CD4-positive, alpha-beta memory T cell (primary cell): ENCODE measurements at regions of chr11 and their contacts with region 1.

Region 1: GRCh38 chr11:66545701-66546367 is at the start of gene ZDHHC24:
- DNase-seq: peak; percentile 79 to 86 (median 82)
- H3K4me3 ChIP-seq: peak within 1 kb of the TSS; percentile 82 to 84
- H3K4me3 Mint-ChIP-seq: peak within 1 kb of the TSS; percentile 85 to 96 (median 92)
- H3K27ac ChIP-seq: peak within 1 kb of the TSS; percentile 82
- H3K27ac Mint-ChIP-seq: peak within 1 kb of the TSS; percentile 67 to 98 (median 92)
- H3K4me1 ChIP-seq: peaks cover 35% of the 10 kb centered on the region
- H3K4me1 Mint-ChIP-seq: peaks cover 22 to 59% (median 34%) of the 10 kb centered on the region in 4 donors
- H3K27me3 ChIP-seq: no peaks in the 10 kb centered on the region
- H3K27me3 Mint-ChIP-seq: no peaks in the 10 kb centered on the region
- total RNA-seq, gene ZDHHC24: 24.5 to 27.2 TPM

Region 2: DNA sequence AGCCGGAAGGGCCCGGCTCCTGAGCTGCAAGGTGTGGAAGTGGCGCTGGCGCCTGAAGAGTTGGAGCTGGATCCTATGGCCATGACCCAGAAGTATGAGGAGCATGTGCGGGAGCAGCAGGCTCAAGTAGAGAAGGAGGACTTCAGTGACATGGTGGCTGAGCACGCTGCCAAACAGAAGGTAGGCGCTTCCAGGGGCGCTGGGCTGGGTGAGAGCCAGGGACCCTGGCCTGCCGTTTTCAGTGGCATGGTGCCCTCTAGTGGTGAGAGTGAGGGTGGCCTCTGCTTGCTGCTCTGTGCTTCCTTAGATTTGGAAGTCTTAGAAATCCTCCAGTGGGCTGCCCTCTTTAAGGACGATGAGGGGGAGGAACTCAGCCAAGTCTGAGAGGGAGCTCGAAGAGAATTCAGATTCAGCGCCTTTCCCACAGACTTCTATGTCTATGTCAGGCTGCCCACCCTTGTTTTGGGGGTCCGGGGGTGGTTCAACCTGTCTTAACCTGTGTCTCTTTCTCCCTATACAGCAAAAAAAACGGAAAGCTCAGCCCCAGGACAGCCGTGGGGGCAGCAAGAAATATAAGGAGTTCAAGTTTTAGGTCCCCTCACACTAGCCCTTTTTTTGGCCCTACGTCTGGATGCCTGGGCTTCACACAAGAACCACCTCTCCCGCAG is 477.5 kb before region 1 on chr11:
- CTCF ChIA-PET with region 1: no interaction called
- POLR2A ChIA-PET with region 1: no interaction called
- intact Hi-C with region 1: no loop called
- DNase-seq: peak; percentile 71 to 76 (median 72)
- H3K4me3 ChIP-seq: no peak overlapping the region
- H3K4me3 Mint-ChIP-seq: peak overlapping the region; percentile 52 to 96 (median 76)
- H3K27ac ChIP-seq: peak overlapping the region; percentile 77
- H3K27ac Mint-ChIP-seq: peak overlapping the region; percentile 92 to 99 (median 93)
- H3K4me1 ChIP-seq: peaks cover 48% of the 10 kb centered on the region
- H3K4me1 Mint-ChIP-seq: peaks cover 39 to 67% (median 51%) of the 10 kb centered on the region in 4 donors
- H3K27me3 ChIP-seq: no peaks in the 10 kb centered on the region
- H3K27me3 Mint-ChIP-seq: no peaks in the 10 kb centered on the region

Region 3: GRCh38 chr11:66480117-66480938 is 65.5 kb before region 1 on chr11 and contains the start of gene DPP3:
- CTCF ChIA-PET with region 1: no interaction called
- POLR2A ChIA-PET with region 1: interaction called, 11 read pairs
- intact Hi-C with region 1: loop called (anchors 2 kb)
- DNase-seq: peak; percentile 94 to 96 (median 96)
- H3K4me3 ChIP-seq: peak within 1 kb of the TSS; percentile 88 to 90
- H3K4me3 Mint-ChIP-seq: peak within 1 kb of the TSS; percentile 87 to 96 (median 90)
- H3K27ac ChIP-seq: peak within 1 kb of the TSS; percentile 81
- H3K27ac Mint-ChIP-seq: peak within 1 kb of the TSS; percentile 78 to 94 (median 91)
- H3K4me1 ChIP-seq: peaks cover 20% of the 10 kb centered on the region
- H3K4me1 Mint-ChIP-seq: peaks cover 13 to 48% (median 21%) of the 10 kb centered on the region in 4 donors
- H3K27me3 ChIP-seq: no peaks in the 10 kb centered on the region
- H3K27me3 Mint-ChIP-seq: no peaks in the 10 kb centered on the region
- total RNA-seq, gene DPP3: 21.0 to 24.0 TPM

Region 4: GRCh38 chr11:66568124-66568916 is 22.5 kb after region 1 on chr11 and contains the start of gene CTSF:
- CTCF ChIA-PET with region 1: interaction called, 3 read pairs
- POLR2A ChIA-PET with region 1: interaction called, 18 read pairs
- intact Hi-C with region 1: no loop called
- DNase-seq: peak; percentile 49 to 72 (median 56)
- H3K4me3 ChIP-seq: peak within 1 kb of the TSS in 1 of 2 donors; percentile 50
- H3K4me3 Mint-ChIP-seq: peak within 1 kb of the TSS; percentile 73 to 87 (median 82)
- H3K27ac ChIP-seq: peak within 1 kb of the TSS; percentile 25
- H3K27ac Mint-ChIP-seq: peak within 1 kb of the TSS in 4 of 7 donors; percentile 48 to 85 (median 68)
- H3K4me1 ChIP-seq: peaks cover 7% of the 10 kb centered on the region
- H3K4me1 Mint-ChIP-seq: peaks cover 2 to 13% (median 6%) of the 10 kb centered on the region in 4 donors
- H3K27me3 ChIP-seq: no peaks in the 10 kb centered on the region
- H3K27me3 Mint-ChIP-seq: peaks cover 0 to 6% of the 10 kb centered on the region in 2 donors
- total RNA-seq, gene CTSF: 28.1 to 31.7 TPM

Region 5: DNA sequence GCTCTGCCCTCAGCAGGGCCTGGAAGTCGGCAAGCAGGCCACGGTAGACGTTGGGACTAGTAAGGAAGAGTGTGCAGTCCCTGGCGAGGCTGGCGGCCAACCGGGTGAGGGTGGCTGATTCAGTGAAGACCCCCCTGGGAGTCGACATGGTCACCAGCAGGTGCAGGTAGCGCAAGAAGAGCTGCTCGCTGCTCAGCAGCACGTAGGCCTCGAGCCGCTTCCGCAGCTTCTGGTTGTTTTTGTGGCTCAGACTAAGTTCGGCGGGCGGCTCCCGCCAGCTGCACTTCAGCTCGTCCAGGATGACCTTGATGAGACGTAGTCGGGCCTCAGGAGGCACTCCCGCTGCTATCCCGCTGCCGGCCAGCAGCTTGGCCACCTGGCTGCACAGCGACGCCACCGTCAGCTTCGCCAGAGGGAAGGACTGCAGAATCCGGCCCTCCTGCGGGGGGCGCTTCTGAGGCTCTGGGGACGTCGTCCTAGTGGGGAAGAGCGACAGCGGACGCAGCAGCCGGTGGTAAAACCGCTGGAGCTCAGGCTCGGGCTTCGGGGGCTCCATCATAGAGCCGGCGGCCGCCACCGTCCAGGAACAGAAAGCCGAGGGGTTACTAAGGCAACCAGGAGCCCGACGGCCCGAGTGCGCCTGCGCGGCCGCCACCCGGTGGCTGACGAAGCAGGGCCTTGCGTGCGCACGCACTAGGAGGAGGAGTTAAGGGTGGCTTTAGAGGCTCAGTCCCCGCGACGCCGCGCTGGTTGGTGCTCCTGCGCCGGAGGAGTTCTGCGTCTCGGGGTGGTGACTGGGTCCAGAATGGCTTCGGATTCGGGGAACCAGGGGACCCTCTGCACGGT is 46.8 kb after region 1 on chr11 and contains the starts of genes CCDC87 and CCS:
- CTCF ChIA-PET with region 1: no interaction called
- POLR2A ChIA-PET with region 1: interaction called, 5 read pairs
- intact Hi-C with region 1: loop called (anchors 1 kb)
- DNase-seq: peak; percentile 95 to 98 (median 97)
- H3K4me3 ChIP-seq: peak within 1 kb of the TSS; percentile 71 to 98
- H3K4me3 Mint-ChIP-seq: peak within 1 kb of the TSS; percentile 98 to 100 (median 99)
- H3K27ac ChIP-seq: peak within 1 kb of the TSS; percentile 88
- H3K27ac Mint-ChIP-seq: peak within 1 kb of the TSS; percentile 96 to 100 (median 100)
- H3K4me1 ChIP-seq: peaks cover 35% of the 10 kb centered on the region
- H3K4me1 Mint-ChIP-seq: peaks cover 16 to 42% (median 27%) of the 10 kb centered on the region in 4 donors
- H3K27me3 ChIP-seq: no peaks in the 10 kb centered on the region
- H3K27me3 Mint-ChIP-seq: no peaks in the 10 kb centered on the region
- total RNA-seq, gene CCDC87: not detected
- total RNA-seq, gene CCS: 61.0 to 61.5 TPM